ENCODE measurements at regions of chr12 and their contacts with region 1.

Region 1: GRCh38 chr12:26109343-26109844 is 15.4 kb downstream of the BHLHE41 start:
- DNase-seq: no peak
- CTCF ChIP-seq: no peak

Region 2: GRCh38 chr12:26097046-26097878 is 12.1 kb before region 1 on chr12:
- CTCF ChIA-PET with region 1: interaction called, 15 read pairs
- POLR2A ChIA-PET with region 1: no interaction called
- DNase-seq: peak; percentile 67
- CTCF ChIP-seq: peak; percentile 87